Prostate gland (tissue), 2 donors: ENCODE measurements at regions of chr11 and their contacts with region 1.

Region 1: GRCh38 chr11:96389720-96390487 is at the starts of genes CCDC82 and JRKL:
- DNase-seq: peak; percentile 97
- H3K4me3 ChIP-seq: peak within 1 kb of the TSS; percentile 79 to 86
- H3K27ac ChIP-seq: peak within 1 kb of the TSS; percentile 82 to 86
- H3K4me1 ChIP-seq: no peaks in the 10 kb centered on the region
- H3K27me3 ChIP-seq: no peaks in the 10 kb centered on the region
- CTCF ChIP-seq: peak in 3 of 4 experiments; percentile 9 to 46 (median 32)
- POLR2A ChIP-seq: peak; percentile 90
- total RNA-seq, gene CCDC82: 8.5 to 20.3 TPM
- total RNA-seq, gene JRKL: 5.9 to 9.8 TPM

Region 2: GRCh38 chr11:95789506-95790122 is 600.3 kb before region 1 on chr11 and contains the start of gene FAM76B:
- intact Hi-C with region 1: loop called (anchors 5 kb)
- DNase-seq: peak; percentile 98
- H3K4me3 ChIP-seq: peak within 1 kb of the TSS; percentile 90 to 95
- H3K27ac ChIP-seq: peak within 1 kb of the TSS; percentile 99
- H3K4me1 ChIP-seq: no peaks in the 10 kb centered on the region
- H3K27me3 ChIP-seq: no peaks in the 10 kb centered on the region
- CTCF ChIP-seq: peak in 2 of 4 experiments; percentile 5 to 19
- POLR2A ChIP-seq: peak; percentile 80
- total RNA-seq, gene FAM76B: 24.4 to 79.5 TPM

Region 3: DNA sequence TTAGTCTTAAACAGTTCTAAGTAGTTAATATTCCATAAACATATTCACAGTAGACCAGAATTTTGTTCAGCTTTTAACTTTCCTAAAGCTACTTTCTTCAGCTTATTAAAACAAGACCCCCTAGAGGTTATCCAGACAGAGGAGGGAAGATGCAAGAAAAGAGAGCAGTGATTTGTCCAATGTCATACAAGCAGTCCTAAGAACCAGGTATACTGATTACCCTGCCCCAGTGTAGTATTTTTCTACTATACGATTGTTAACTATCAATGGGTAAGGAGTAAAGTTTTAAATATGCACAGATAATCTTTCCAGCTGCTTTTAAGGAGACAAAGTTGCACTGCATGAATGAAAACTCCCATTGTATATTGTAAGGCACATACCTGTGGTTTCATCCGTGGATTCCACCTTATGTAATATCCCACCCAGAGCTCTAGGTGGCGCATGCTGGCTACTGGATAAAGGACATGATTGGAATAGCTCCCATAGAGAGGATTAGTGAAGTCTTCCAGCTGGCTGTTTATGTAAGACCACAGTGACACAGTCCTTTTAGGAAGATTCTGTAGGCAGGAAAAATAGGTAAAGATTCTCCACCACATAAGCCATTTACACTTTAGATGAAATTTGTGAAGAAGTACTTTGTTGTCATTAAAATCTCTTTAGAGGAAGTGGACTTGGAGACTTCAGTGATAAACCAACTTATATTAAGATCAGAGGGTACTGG is 554.0 kb before region 1 on chr11:
- intact Hi-C with region 1: loop called (anchors 2 kb)
- DNase-seq: peak; percentile 49
- H3K4me3 ChIP-seq: no peak overlapping the region
- H3K27ac ChIP-seq: no peak overlapping the region
- H3K4me1 ChIP-seq: peaks cover 6% of the 10 kb centered on the region
- H3K27me3 ChIP-seq: no peaks in the 10 kb centered on the region
- CTCF ChIP-seq: peak; percentile 61 to 87 (median 80)
- POLR2A ChIP-seq: no peak

Region 4: DNA sequence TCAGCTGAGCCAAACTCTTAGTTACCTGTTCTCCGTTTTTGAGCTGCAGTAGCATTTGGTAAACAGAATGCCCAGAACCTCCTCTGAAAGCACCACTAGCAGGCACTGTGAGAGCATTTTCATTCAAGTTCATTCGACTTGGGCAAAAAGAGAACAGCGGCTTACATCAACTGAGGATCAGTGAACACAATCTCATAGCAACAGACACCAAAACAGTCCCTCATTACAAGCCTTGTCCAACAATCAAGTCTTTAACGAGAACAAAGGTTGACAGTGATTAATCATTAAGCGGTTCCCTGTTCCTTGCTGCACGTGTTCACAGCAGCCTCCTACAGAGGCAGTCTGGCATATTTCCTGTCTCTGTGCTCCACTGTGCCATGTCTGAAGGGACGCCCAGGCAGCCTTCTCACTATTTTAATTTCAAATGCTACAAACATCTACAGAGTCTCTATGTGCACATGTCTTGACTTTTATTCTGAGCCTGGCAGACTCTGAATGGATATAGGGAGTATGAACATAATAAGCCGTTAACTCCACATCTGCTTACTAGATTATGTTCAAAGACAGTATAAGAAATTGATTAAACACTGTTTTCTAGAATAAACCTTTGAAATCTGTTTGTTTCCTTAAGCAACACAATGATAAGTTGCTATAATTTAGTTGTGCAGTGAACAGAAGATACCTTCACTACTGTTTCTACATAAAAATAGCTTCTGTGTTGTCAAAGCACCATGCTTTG is 377.6 kb before region 1 on chr11:
- intact Hi-C with region 1: loop called (anchors 5 kb)
- DNase-seq: peak; percentile 42
- H3K4me3 ChIP-seq: no peak overlapping the region
- H3K27ac ChIP-seq: peak overlapping the region in 1 of 2 donors; percentile 29
- H3K4me1 ChIP-seq: no peaks in the 10 kb centered on the region
- H3K27me3 ChIP-seq: no peaks in the 10 kb centered on the region
- CTCF ChIP-seq: peak in 3 of 4 experiments; percentile 40 to 54 (median 52)
- POLR2A ChIP-seq: no peak

Region 5: GRCh38 chr11:96045622-96046456 is 344.1 kb before region 1 on chr11:
- intact Hi-C with region 1: loop called (anchors 5 kb)
- DNase-seq: peak; percentile 54
- H3K4me3 ChIP-seq: no peak overlapping the region
- H3K27ac ChIP-seq: peak overlapping the region in 1 of 2 donors; percentile 56
- H3K4me1 ChIP-seq: no peaks in the 10 kb centered on the region
- H3K27me3 ChIP-seq: no peaks in the 10 kb centered on the region
- CTCF ChIP-seq: peak in 3 of 4 experiments; percentile 17 to 62 (median 42)
- POLR2A ChIP-seq: no peak